Sigmoid colon (tissue), 7 donors: ENCODE measurements at regions of chr20 and their contacts with region 1.

Region 1: DNA sequence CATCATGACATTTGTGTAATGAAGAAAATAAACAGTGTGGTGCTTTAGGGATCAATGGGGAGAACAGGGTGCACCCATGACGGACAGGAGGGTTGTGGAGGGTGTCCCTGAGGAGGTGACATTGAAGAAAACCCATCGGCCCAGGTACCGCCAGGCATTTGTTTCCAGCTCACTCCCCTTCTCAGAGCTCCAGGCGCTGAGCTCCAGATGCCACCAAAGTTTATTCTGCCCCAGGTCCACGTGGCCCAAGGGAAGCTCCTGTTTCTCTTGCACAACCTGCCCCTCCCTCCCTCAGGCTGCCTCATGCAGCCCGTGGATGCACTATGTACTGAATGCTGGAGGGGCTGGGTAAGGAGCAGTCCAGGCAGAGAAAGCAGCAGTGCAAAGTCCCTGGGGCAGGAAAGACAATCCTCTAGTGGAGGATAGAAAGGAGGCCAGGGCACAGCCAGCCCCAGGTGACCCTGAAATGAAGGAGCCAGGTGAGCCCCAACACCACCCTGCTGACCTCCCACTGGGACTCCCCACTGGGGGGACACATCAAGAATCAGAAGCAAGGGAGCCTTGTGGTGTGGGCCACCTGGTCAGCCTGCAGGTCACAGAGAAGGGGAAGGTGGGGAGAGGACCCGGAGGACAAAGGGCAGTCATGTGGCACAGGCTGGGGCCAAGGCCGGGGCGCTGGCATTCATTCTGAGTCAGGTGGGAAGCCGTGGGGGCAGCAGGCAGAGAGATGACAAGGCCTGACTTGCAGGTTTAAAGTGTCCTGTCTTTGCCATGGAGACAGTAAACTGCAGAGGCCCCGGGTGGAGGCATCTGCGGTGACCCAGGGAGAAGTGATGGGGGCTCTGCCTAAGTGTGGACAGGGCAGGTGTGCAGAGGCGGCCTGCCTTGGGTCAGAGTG is 230.1 kb downstream of the PREX1 start:
- DNase-seq: peak; percentile 48
- H3K4me3 ChIP-seq: no peak overlapping the region
- H3K27ac ChIP-seq: no peak overlapping the region
- H3K4me1 ChIP-seq: peaks cover 0 to 14% (median 12%) of the 10 kb centered on the region in 4 donors
- H3K27me3 ChIP-seq: no peaks in the 10 kb centered on the region
- CTCF ChIP-seq: no peak
- EP300 ChIP-seq: no peak
- POLR2A ChIP-seq: no peak

Region 2: GRCh38 chr20:48260279-48260797 is 337.3 kb before region 1 on chr20:
- intact Hi-C with region 1: loop called (anchors 10 kb)
- DNase-seq: no peak
- H3K4me3 ChIP-seq: no peak overlapping the region
- H3K27ac ChIP-seq: no peak overlapping the region
- H3K4me1 ChIP-seq: no peaks in the 10 kb centered on the region
- H3K27me3 ChIP-seq: no peaks in the 10 kb centered on the region
- CTCF ChIP-seq: no peak
- EP300 ChIP-seq: no peak
- POLR2A ChIP-seq: no peak